SK-N-SH (cell line): ENCODE measurements at regions of chr6 and their contacts with region 1.

Region 1: DNA sequence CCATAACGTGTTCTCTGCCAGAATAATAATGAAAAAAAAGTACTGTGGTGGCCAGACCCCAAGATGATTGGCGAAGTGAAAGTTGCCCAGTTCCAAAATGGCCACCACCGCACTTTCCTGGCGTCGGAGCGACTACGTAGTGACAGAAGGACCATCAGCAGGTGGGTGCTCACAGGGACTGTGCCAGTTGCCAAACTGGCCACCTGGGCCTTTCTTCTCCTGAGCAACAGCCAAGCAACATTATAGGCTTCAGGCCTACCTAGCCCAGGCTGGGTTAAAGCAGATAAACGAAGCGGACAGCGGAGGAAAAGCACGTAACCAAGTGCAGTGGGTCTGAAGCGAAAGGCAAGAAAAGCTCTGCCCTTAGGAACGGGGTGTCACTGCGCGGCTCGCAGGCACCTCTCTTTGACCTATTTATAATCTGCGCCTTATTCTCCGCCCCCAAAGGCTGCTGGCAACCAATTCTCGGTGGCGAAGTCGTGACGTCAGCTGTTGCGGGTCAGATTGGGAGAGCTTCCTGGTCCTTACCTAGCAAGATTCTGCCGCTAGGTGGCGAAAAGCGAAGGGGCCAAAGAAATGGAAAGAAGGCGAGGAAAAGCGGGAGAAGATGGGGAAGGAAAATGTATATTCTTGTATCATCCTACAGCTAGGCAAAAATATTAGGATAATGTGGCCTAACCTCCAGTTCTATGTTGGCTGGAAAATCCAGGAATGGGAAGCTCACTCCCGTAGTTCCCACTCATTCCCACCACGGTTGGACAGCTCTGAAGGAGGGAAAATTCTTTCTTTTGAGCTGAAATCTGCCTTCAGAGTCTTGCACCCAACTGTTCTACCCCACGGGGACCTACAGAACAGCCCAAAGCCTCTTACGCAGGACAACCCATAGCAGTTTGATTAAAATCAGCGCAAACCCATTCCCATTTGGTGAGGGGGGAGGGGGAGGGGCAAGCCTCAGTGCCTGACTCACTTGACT is 6.9 kb upstream of the MOG start:
- DNase-seq: peak; percentile 89
- H3K4me3 ChIP-seq: peak overlapping the region; percentile 40 to 52
- H3K27ac ChIP-seq: peak overlapping the region; percentile 17 to 69; a peak in 3 of 4 replicates
- H3K4me1 ChIP-seq: peaks cover 0 to 7% of the 10 kb centered on the region in 2 experiments; a peak in 1 of 4 replicates
- H3K27me3 ChIP-seq: peaks cover 7% of the 10 kb centered on the region; the same call in 1 of the 2 replicates
- CTCF ChIP-seq: peak; percentile 89
- EP300 ChIP-seq: no peak
- RAD21 ChIP-seq: no peak

Region 2: GRCh38 chr6:29564875-29565274 is 85.1 kb before region 1 on chr6:
- CTCF ChIA-PET with region 1: no interaction called
- POLR2A ChIA-PET with region 1: no interaction called
- DNase-seq: no peak
- H3K4me3 ChIP-seq: no peak overlapping the region
- H3K27ac ChIP-seq: no peak overlapping the region
- H3K4me1 ChIP-seq: no peaks in the 10 kb centered on the region
- H3K27me3 ChIP-seq: peaks cover 44% of the 10 kb centered on the region; the same call in 1 of the 2 replicates
- CTCF ChIP-seq: no peak
- EP300 ChIP-seq: no peak
- RAD21 ChIP-seq: no peak

Region 3: DNA sequence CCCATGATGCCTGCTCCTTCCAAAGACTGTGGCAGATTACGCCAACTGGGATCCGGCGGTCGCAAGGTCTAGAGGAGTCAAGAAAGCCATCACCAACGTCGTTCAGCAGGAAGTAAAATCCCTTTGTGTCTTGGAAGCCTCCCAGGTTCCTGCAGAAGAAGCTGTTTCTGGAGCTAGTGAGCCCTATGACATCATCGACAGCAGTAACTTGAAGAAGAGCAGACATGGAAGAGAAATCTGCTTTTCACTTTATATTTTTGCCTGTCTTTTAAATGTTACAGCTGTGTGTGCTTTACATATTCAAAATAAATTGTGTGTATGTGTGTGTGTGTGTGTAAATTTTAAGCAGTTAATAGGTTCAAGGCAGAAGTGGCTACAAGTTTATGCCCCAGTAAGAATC is 72.4 kb before region 1 on chr6:
- CTCF ChIA-PET with region 1: no interaction called
- POLR2A ChIA-PET with region 1: no interaction called
- DNase-seq: no peak
- H3K4me3 ChIP-seq: no peak overlapping the region
- H3K27ac ChIP-seq: no peak overlapping the region
- H3K4me1 ChIP-seq: no peaks in the 10 kb centered on the region
- H3K27me3 ChIP-seq: peaks cover 14% of the 10 kb centered on the region; the same call in 1 of the 2 replicates
- CTCF ChIP-seq: no peak
- EP300 ChIP-seq: no peak
- RAD21 ChIP-seq: no peak

Region 4: DNA sequence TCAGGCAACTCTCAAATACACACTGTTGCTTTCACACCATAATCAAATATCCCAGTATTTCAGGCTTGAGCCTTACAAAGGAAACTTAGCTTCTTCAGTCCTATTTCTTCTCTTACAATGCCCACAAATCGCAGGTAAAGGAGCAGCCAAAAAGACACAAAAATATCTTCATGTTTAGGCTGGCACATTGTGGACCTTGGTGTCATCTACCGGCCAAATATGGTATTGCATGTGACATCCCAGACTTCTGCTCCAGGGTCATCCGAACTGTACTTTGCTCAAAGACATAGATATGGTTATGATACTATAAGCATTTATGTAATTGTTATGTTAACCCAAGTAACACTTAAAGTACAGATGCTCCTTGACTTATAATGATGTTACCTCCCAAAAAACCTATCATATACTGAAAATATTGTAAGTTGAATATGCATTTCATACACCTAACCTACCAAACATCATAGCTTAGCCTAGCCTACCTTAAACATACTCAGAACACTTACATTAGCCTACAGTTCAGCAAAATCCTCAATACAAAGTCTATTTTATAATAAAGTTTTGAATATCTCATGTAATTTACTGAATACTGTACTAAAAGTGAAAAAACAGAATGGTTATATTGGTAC is 60.5 kb before region 1 on chr6:
- CTCF ChIA-PET with region 1: interaction called, 10 read pairs
- POLR2A ChIA-PET with region 1: no interaction called
- DNase-seq: peak; percentile 54
- H3K4me3 ChIP-seq: no peak overlapping the region; a peak in 1 of 4 replicates
- H3K27ac ChIP-seq: no peak overlapping the region
- H3K4me1 ChIP-seq: no peaks in the 10 kb centered on the region; a peak in 1 of 4 replicates
- H3K27me3 ChIP-seq: peaks cover 22% of the 10 kb centered on the region; the same call in 1 of the 2 replicates
- CTCF ChIP-seq: peak; percentile 98
- EP300 ChIP-seq: no peak
- RAD21 ChIP-seq: peak; percentile 90

Region 5: GRCh38 chr6:29611426-29611825 is 38.6 kb before region 1 on chr6:
- CTCF ChIA-PET with region 1: interaction called, 11 read pairs
- POLR2A ChIA-PET with region 1: no interaction called
- DNase-seq: no peak
- H3K4me3 ChIP-seq: no peak overlapping the region
- H3K27ac ChIP-seq: no peak overlapping the region
- H3K4me1 ChIP-seq: no peaks in the 10 kb centered on the region
- H3K27me3 ChIP-seq: no peaks in the 10 kb centered on the region
- CTCF ChIP-seq: no peak
- EP300 ChIP-seq: no peak
- RAD21 ChIP-seq: no peak

Region 6: GRCh38 chr6:29665942-29666825 is 16.2 kb after region 1 on chr6:
- CTCF ChIA-PET with region 1: interaction called, 120 read pairs
- POLR2A ChIA-PET with region 1: no interaction called
- DNase-seq: no peak
- H3K4me3 ChIP-seq: no peak overlapping the region
- H3K27ac ChIP-seq: no peak overlapping the region
- H3K4me1 ChIP-seq: no peaks in the 10 kb centered on the region
- H3K27me3 ChIP-seq: peaks cover 11% of the 10 kb centered on the region; the same call in 1 of the 2 replicates
- CTCF ChIP-seq: no peak
- EP300 ChIP-seq: no peak
- RAD21 ChIP-seq: no peak

Region 7: GRCh38 chr6:29696155-29697125 is 46.5 kb after region 1 on chr6:
- CTCF ChIA-PET with region 1: interaction called, 19 read pairs
- POLR2A ChIA-PET with region 1: no interaction called
- DNase-seq: no peak
- H3K4me3 ChIP-seq: no peak overlapping the region; a peak in 1 of 4 replicates
- H3K27ac ChIP-seq: no peak overlapping the region
- H3K4me1 ChIP-seq: no peaks in the 10 kb centered on the region
- H3K27me3 ChIP-seq: no peaks in the 10 kb centered on the region; the same call in 1 of the 2 replicates
- CTCF ChIP-seq: peak; percentile 50
- EP300 ChIP-seq: no peak
- RAD21 ChIP-seq: no peak